Caco-2 (cell line): ENCODE measurements at regions of chr5 and their contacts with region 1.

Region 1: GRCh38 chr5:97224112-97224750 is 41.2 kb upstream of the RIOK2 start:
- DNase-seq: peak in 1 of 2 experiments; percentile 14
- H3K4me3 ChIP-seq: no peak overlapping the region
- H3K4me3 Mint-ChIP-seq: no peak overlapping the region
- H3K27ac Mint-ChIP-seq: no peak overlapping the region
- H3K4me1 ChIP-seq: peaks cover 19% of the 10 kb centered on the region
- H3K4me1 Mint-ChIP-seq: peaks cover 5% of the 10 kb centered on the region
- H3K27me3 ChIP-seq: no peaks in the 10 kb centered on the region
- H3K27me3 Mint-ChIP-seq: no peaks in the 10 kb centered on the region
- CTCF ChIP-seq: no peak

Region 2: DNA sequence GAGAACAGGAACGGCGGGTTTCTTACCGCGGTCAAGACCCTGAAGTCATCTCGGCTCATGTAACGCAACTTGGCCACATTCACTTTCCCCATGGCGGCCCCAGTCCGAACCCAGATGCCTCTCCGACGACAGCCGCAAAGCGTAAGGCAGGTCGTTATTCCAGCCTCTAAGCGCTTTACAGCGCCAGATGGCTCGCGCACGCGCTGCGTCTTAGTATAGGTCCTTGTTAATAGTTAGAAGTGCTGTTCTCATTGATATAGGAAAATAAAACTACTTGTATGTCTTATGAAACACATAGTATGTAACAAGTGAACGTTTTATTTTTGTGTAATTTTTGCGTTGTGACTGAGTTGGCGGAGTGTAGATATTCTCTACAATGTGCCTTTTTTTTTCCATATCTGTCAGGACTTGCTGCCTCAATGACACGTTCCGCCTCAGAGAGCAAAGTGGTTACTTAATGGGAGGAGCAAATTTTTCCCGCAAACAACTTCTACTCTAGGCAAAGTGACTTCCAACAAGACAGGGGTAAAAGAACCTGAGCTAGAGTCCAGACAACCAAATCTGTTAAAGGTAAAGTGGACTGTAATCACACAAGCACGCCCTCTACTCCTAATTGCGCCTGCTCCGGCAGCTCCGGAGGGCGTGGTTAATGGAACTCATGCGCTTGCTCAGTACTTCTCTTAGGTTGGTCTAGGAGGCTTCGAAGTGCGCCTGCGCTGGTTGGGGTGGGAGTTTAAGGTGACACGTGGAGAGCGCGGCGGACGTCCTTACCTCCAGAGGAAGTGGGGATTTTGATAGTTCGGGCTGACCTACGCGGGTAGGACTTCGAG is 40.9 kb before region 1 on chr5 and contains the start of gene RIOK2:
- CTCF ChIA-PET with region 1: no interaction called
- POLR2A ChIA-PET with region 1: no interaction called
- intact Hi-C with region 1: loop called (anchors 1 kb)
- DNase-seq: peak; percentile 96 to 98
- H3K4me3 ChIP-seq: peak within 1 kb of the TSS; percentile 87
- H3K4me3 Mint-ChIP-seq: peak within 1 kb of the TSS; percentile 74
- H3K27ac Mint-ChIP-seq: peak within 1 kb of the TSS; percentile 98
- H3K4me1 ChIP-seq: 0 out of 2 replicates have a peak, but pooled peaks cover 13% of the 10 kb centered on the region
- H3K4me1 Mint-ChIP-seq: peaks cover 25% of the 10 kb centered on the region
- H3K27me3 ChIP-seq: no peaks in the 10 kb centered on the region
- H3K27me3 Mint-ChIP-seq: no peaks in the 10 kb centered on the region
- CTCF ChIP-seq: no peak
- total RNA-seq, gene RIOK2: 36.3 and 38.7 TPM in 2 replicates

Region 3: GRCh38 chr5:97194366-97194765 is 29.9 kb before region 1 on chr5:
- CTCF ChIA-PET with region 1: no interaction called
- POLR2A ChIA-PET with region 1: no interaction called
- intact Hi-C with region 1: no loop called
- DNase-seq: no peak
- H3K4me3 ChIP-seq: no peak overlapping the region
- H3K4me3 Mint-ChIP-seq: no peak overlapping the region
- H3K27ac Mint-ChIP-seq: no peak overlapping the region
- H3K4me1 ChIP-seq: peaks cover 5% of the 10 kb centered on the region; the same call in 1 of the 2 replicates
- H3K4me1 Mint-ChIP-seq: no peaks in the 10 kb centered on the region
- H3K27me3 ChIP-seq: no peaks in the 10 kb centered on the region
- H3K27me3 Mint-ChIP-seq: no peaks in the 10 kb centered on the region
- CTCF ChIP-seq: no peak

Region 4: GRCh38 chr5:97208714-97209113 is 15.5 kb before region 1 on chr5:
- CTCF ChIA-PET with region 1: no interaction called
- POLR2A ChIA-PET with region 1: no interaction called
- intact Hi-C with region 1: no loop called
- DNase-seq: no peak
- H3K4me3 ChIP-seq: no peak overlapping the region
- H3K4me3 Mint-ChIP-seq: no peak overlapping the region
- H3K27ac Mint-ChIP-seq: no peak overlapping the region
- H3K4me1 ChIP-seq: no peaks in the 10 kb centered on the region
- H3K4me1 Mint-ChIP-seq: no peaks in the 10 kb centered on the region
- H3K27me3 ChIP-seq: no peaks in the 10 kb centered on the region; the same call in 1 of the 2 replicates
- H3K27me3 Mint-ChIP-seq: no peaks in the 10 kb centered on the region
- CTCF ChIP-seq: no peak